ENCODE measurements at regions of chr2 and their contacts with region 1.

Region 1: GRCh38 chr2:12658310-12658945 is 58.3 kb upstream of the TRIB2 start:
- DNase-seq: no peak
- H3K4me3 Mint-ChIP-seq: no peak overlapping the region
- H3K27ac Mint-ChIP-seq: peak overlapping the region; percentile 59
- H3K4me1 Mint-ChIP-seq: peaks cover 15% of the 10 kb centered on the region
- H3K27me3 Mint-ChIP-seq: no peaks in the 10 kb centered on the region

Region 2: GRCh38 chr2:12709207-12709522 is 50.7 kb after region 1 on chr2:
- CTCF ChIA-PET with region 1: no interaction called
- intact Hi-C with region 1: loop called (anchors 5 kb)
- DNase-seq: peak; percentile 55
- H3K4me3 Mint-ChIP-seq: no peak overlapping the region
- H3K27ac Mint-ChIP-seq: peak overlapping the region; percentile 11
- H3K4me1 Mint-ChIP-seq: peaks cover 44% of the 10 kb centered on the region
- H3K27me3 Mint-ChIP-seq: no peaks in the 10 kb centered on the region

Region 3: DNA sequence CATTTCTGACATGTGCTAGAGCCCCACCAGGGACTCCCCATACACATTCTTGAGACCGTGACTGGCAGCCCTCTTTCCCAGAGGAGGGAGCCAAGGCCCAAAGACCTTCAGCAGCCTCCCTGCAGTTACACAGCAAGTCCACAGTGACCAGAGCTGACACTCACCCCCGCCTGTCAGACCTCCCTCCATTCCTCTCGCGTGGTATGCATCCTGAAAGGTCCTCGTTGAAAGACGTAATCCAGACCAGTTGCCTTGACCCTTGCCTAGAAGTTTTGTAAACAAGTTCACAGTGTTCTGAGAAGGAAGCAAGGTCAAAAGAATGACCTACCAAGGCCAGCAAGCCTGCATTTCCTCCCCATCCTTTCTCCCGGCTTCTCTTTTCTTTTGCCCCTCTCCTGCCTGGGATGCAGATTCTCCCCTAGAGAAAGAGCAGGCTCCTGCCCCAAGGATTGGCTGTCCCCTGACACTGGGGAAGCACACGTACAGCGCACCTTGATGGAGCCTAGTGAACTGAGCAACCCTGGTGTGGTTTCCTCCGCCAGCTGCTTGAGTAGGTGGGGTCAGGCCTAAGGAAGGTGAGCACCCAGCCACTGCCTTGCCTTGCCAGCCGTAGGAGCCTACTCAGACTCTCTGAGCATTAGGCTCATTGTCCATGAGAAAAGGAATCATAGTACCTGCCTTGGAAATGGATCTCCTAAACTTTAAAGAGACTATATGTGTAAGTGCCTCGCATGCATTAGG is 76.7 kb after region 1 on chr2:
- CTCF ChIA-PET with region 1: no interaction called
- intact Hi-C with region 1: no loop called
- DNase-seq: no peak
- H3K4me3 Mint-ChIP-seq: no peak overlapping the region
- H3K27ac Mint-ChIP-seq: no peak overlapping the region
- H3K4me1 Mint-ChIP-seq: peaks cover 29% of the 10 kb centered on the region
- H3K27me3 Mint-ChIP-seq: no peaks in the 10 kb centered on the region